Cardiac septum (tissue), 1 donor: ENCODE measurements at regions of chr4 and their contacts with region 1.

Region 1: GRCh38 chr4:141133146-141133998 is at the start of gene RNF150:
- DNase-seq: peak; percentile 86
- total RNA-seq, gene RNF150: 69.2 TPM

Region 2: DNA sequence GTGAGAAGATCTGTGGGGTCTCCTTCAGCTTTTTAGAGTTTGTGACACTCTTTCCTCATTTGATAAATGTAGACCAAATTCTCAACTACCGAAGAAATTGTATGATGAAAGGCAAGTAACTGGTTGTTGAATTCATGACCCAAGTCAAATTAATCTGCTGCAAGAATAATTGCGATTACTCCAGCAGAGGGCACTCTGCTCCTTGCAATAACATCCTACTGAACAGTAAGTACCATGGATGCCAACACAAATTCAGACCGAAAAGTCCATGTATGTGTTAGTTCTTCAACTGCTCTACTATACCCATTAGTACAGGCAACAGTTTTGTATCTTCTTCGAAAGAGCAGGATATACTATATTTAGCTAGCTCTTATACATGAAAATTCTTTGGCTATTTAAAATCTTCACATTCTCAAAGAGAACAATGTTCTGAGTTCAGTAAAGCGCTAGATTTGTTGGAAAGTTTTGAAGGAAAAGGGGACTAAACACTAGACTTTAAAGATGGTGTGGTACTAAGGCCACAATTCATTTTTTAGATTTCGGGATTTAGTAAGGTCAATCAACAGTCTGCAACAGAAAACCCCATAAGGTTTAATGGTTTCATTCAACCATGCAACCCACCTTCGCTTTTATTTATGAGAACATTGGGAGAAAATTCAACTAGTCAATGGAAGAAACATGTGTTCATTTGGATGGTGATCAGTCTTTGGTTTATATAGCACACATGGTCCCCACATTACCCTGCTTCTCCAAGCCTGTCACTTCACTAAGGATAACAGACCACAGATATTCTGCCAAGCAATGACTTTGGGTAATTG is 271.8 kb before region 1 on chr4:
- intact Hi-C with region 1: loop called (anchors 2 kb)
- DNase-seq: no peak

Region 3: GRCh38 chr4:140928880-140929279 is 204.5 kb before region 1 on chr4:
- intact Hi-C with region 1: loop called (anchors 5 kb)
- DNase-seq: no peak

Region 4: GRCh38 chr4:140982613-140983340 is 150.6 kb before region 1 on chr4:
- intact Hi-C with region 1: loop called (anchors 5 kb)
- DNase-seq: no peak

Region 5: GRCh38 chr4:141028024-141028529 is 105.3 kb before region 1 on chr4:
- intact Hi-C with region 1: loop called (anchors 5 kb)
- DNase-seq: no peak

Region 6: GRCh38 chr4:141074098-141074878 is 59.1 kb before region 1 on chr4:
- intact Hi-C with region 1: loop called (anchors 2 kb)
- DNase-seq: no peak

Region 7: DNA sequence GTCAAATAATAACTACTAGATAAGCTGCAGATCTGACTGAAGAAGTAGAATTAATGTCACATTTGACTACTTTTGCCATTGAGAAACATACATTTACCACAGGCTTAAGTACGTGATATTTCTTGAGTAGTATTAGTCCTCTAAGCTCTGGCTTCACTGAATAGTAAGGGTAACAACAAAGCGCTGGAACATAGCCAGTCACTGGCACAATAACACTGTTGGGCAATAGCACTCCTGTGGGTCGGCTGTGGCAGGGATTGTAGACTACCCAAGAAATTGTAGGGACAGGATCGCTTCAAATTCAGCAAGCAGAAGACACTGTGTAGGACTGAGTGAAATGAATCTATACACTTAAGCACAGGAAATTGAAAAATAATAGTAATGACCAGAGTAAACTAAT is 475.9 kb after region 1 on chr4:
- intact Hi-C with region 1: no loop called
- DNase-seq: peak; percentile 53